K562 (cell line): ENCODE measurements at regions of chr6 and their contacts with region 1.

Region 1: GRCh38 chr6:36781669-36782068 is 57.6 kb downstream of the CPNE5 start:
- DNase-seq: no peak
- ATAC-seq: no peak
- H3K4me3 ChIP-seq: no peak overlapping the region
- H3K27ac ChIP-seq: no peak overlapping the region
- H3K4me1 ChIP-seq: peaks cover 0 to 5% of the 10 kb centered on the region in 2 experiments; a peak in 2 of 5 replicates
- H3K27me3 ChIP-seq: peaks cover 34 to 42% of the 10 kb centered on the region in 2 experiments
- CTCF ChIP-seq: no peak
- EP300 ChIP-seq: no peak
- POLR2A ChIP-seq: no peak
- RAD21 ChIP-seq: no peak

Region 2: DNA sequence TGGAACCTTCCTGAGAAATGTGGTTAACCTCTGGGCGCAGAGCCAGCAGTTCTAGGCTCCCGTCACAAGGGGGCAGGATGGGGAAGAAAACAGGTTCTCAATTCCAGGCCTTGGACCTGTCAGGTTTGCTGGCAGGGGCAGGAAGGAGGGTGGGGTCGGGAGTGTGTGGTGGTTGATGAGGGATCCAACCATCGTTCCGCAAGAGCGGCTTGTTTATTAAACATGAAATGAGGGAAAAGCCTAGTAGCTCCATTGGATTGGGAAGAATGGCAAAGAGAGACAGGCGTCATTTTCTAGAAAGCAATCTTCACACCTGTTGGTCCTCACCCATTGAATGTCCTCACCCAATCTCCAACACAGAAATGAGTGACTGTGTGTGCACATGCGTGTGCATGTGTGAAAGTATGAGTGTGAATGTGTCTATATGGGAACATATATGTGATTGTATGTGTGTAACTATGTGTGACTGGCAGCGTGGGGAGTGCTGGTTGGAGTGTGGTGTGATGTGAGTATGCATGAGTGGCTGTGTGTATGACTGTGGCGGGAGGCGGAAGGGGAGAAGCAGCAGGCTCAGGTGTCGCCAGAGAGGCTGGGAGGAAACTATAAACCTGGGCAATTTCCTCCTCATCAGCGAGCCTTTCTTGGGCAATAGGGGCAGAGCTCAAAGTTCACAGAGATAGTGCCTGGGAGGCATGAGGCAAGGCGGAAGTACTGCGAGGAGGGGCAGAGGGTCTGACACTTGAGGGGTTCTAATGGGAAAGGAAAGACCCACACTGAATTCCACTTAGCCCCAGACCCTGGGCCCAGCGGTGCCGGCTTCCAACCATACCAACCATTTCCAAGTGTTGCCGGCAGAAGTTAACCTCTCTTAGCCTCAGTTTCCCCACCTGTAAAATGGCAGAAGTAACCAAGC is 157.9 kb before region 1 on chr6:
- CTCF ChIA-PET with region 1: no interaction called
- POLR2A ChIA-PET with region 1: no interaction called
- in situ Hi-C with region 1: no loop called
- intact Hi-C with region 1: no loop called
- DNase-seq: peak; percentile 86 to 91 (median 88)
- ATAC-seq: peak; percentile 95
- H3K4me3 ChIP-seq: no peak overlapping the region
- H3K27ac ChIP-seq: no peak overlapping the region
- H3K4me1 ChIP-seq: peaks cover 0 to 4% of the 10 kb centered on the region in 2 experiments; a peak in 2 of 5 replicates
- H3K27me3 ChIP-seq: peaks cover 2 to 23% of the 10 kb centered on the region in 2 experiments; a peak in 3 of 5 replicates
- CTCF ChIP-seq: peak; percentile 95 to 97 (median 97)
- EP300 ChIP-seq: no peak
- POLR2A ChIP-seq: no peak
- RAD21 ChIP-seq: peak; percentile 97 to 99

Region 3: GRCh38 chr6:36716476-36717093 is 65.1 kb before region 1 on chr6:
- CTCF ChIA-PET with region 1: no interaction called
- POLR2A ChIA-PET with region 1: no interaction called
- in situ Hi-C with region 1: no loop called
- intact Hi-C with region 1: no loop called
- DNase-seq: no peak
- ATAC-seq: no peak
- H3K4me3 ChIP-seq: no peak overlapping the region
- H3K27ac ChIP-seq: no peak overlapping the region
- H3K4me1 ChIP-seq: peaks cover 0 to 9% of the 10 kb centered on the region in 2 experiments; a peak in 2 of 5 replicates
- H3K27me3 ChIP-seq: peaks cover 35 to 83% of the 10 kb centered on the region in 2 experiments
- CTCF ChIP-seq: no peak
- EP300 ChIP-seq: no peak
- POLR2A ChIP-seq: no peak
- RAD21 ChIP-seq: no peak

Region 4: GRCh38 chr6:36793296-36793912 is 11.7 kb after region 1 on chr6:
- CTCF ChIA-PET with region 1: no interaction called
- POLR2A ChIA-PET with region 1: interaction called, 10 read pairs
- in situ Hi-C with region 1: no loop called
- intact Hi-C with region 1: no loop called
- DNase-seq: no peak
- ATAC-seq: no peak
- H3K4me3 ChIP-seq: no peak overlapping the region
- H3K27ac ChIP-seq: no peak overlapping the region
- H3K4me1 ChIP-seq: peaks cover 0 to 9% of the 10 kb centered on the region in 2 experiments; a peak in 2 of 5 replicates
- H3K27me3 ChIP-seq: peaks cover 71 to 75% of the 10 kb centered on the region in 2 experiments
- CTCF ChIP-seq: no peak
- EP300 ChIP-seq: no peak
- POLR2A ChIP-seq: no peak
- RAD21 ChIP-seq: no peak

Region 5: GRCh38 chr6:36897609-36898008 is 115.9 kb after region 1 on chr6:
- CTCF ChIA-PET with region 1: no interaction called
- POLR2A ChIA-PET with region 1: no interaction called
- in situ Hi-C with region 1: no loop called
- intact Hi-C with region 1: no loop called
- DNase-seq: peak in 2 of 4 experiments; percentile 39 to 41
- ATAC-seq: peak; percentile 85
- H3K4me3 ChIP-seq: no peak overlapping the region
- H3K27ac ChIP-seq: no peak overlapping the region
- H3K4me1 ChIP-seq: no peaks in the 10 kb centered on the region
- H3K27me3 ChIP-seq: no peaks in the 10 kb centered on the region
- CTCF ChIP-seq: peak; percentile 35 to 48 (median 36); a peak in 3 of 6 replicates
- EP300 ChIP-seq: no peak
- POLR2A ChIP-seq: no peak
- RAD21 ChIP-seq: peak in 1 of 2 experiments; percentile 21; a peak in 1 of 4 replicates